ENCODE measurements at regions of chr1 and their contacts with region 1.

Region 1: GRCh38 chr1:30718636-30719405 is 4.6 kb downstream of the MATN1 start:
- DNase-seq: peak; percentile 97
- H3K4me3 ChIP-seq: peak overlapping the region; percentile 49 to 74 (median 53)
- H3K27ac ChIP-seq: peak overlapping the region; percentile 99 to 100 (median 100)
- H3K4me1 ChIP-seq: peaks cover 0 to 59% (median 36%) of the 10 kb centered on the region in 6 donors
- H3K27me3 ChIP-seq: no peaks in the 10 kb centered on the region
- CTCF ChIP-seq: peak; percentile 97 to 100 (median 99)
- POLR2A ChIP-seq: peak; percentile 53 to 94 (median 90)

Region 2: GRCh38 chr1:29230553-29231378 is 1488.1 kb before region 1 on chr1 and contains the start of gene MECR:
- intact Hi-C with region 1: loop called (anchors 10 kb)
- DNase-seq: peak; percentile 98
- H3K4me3 ChIP-seq: peak within 1 kb of the TSS; percentile 55 to 83 (median 79)
- H3K27ac ChIP-seq: peak within 1 kb of the TSS; percentile 33 to 83 (median 73)
- H3K4me1 ChIP-seq: peaks cover 11 to 36% (median 19%) of the 10 kb centered on the region in 6 donors
- H3K27me3 ChIP-seq: peaks cover 0 to 23% (median 0%) of the 10 kb centered on the region in 7 donors
- CTCF ChIP-seq: peak in 6 of 11 experiments; percentile 12 to 52 (median 40)
- POLR2A ChIP-seq: peak in 1 of 3 donors; percentile 18
- total RNA-seq, gene MECR: 6.4 to 25.4 (median 12.9) TPM

Region 3: GRCh38 chr1:30545365-30545764 is 173.5 kb before region 1 on chr1:
- intact Hi-C with region 1: no loop called
- DNase-seq: no peak
- H3K4me3 ChIP-seq: no peak overlapping the region
- H3K27ac ChIP-seq: no peak overlapping the region
- H3K4me1 ChIP-seq: no peaks in the 10 kb centered on the region
- H3K27me3 ChIP-seq: peaks cover 0 to 15% (median 0%) of the 10 kb centered on the region in 7 donors
- CTCF ChIP-seq: no peak
- POLR2A ChIP-seq: no peak

Region 4: GRCh38 chr1:30779294-30780071 is 60.7 kb after region 1 on chr1:
- intact Hi-C with region 1: loop called (anchors 2 kb)
- DNase-seq: peak; percentile 97
- H3K4me3 ChIP-seq: peak overlapping the region in 1 of 8 donors; percentile 28
- H3K27ac ChIP-seq: peak overlapping the region in 3 of 8 donors; percentile 55 to 78 (median 69)
- H3K4me1 ChIP-seq: peaks cover 20 to 72% (median 40%) of the 10 kb centered on the region in 6 donors
- H3K27me3 ChIP-seq: no peaks in the 10 kb centered on the region
- CTCF ChIP-seq: peak; percentile 83 to 99 (median 97)
- POLR2A ChIP-seq: no peak

Region 5: GRCh38 chr1:30877205-30877912 is 158.5 kb after region 1 on chr1:
- intact Hi-C with region 1: no loop called
- DNase-seq: no peak
- H3K4me3 ChIP-seq: no peak overlapping the region
- H3K27ac ChIP-seq: peak overlapping the region in 6 of 8 donors; percentile 20 to 69 (median 48)
- H3K4me1 ChIP-seq: peaks cover 0 to 63% (median 30%) of the 10 kb centered on the region in 6 donors
- H3K27me3 ChIP-seq: peaks cover 0 to 24% (median 0%) of the 10 kb centered on the region in 7 donors
- CTCF ChIP-seq: no peak
- POLR2A ChIP-seq: no peak

Region 6: GRCh38 chr1:30911046-30911954 is 192.5 kb after region 1 on chr1:
- intact Hi-C with region 1: loop called (anchors 10 kb)
- DNase-seq: peak; percentile 87
- H3K4me3 ChIP-seq: no peak overlapping the region
- H3K27ac ChIP-seq: peak overlapping the region in 3 of 8 donors; percentile 73 to 81 (median 77)
- H3K4me1 ChIP-seq: peaks cover 10 to 70% (median 48%) of the 10 kb centered on the region in 6 donors
- H3K27me3 ChIP-seq: peaks cover 0 to 39% (median 14%) of the 10 kb centered on the region in 7 donors
- CTCF ChIP-seq: peak; percentile 56 to 91 (median 76)
- POLR2A ChIP-seq: no peak